CD4-positive, alpha-beta T cell (primary cell): ENCODE measurements at regions of chr12 and their contacts with region 1.

Region 1: DNA sequence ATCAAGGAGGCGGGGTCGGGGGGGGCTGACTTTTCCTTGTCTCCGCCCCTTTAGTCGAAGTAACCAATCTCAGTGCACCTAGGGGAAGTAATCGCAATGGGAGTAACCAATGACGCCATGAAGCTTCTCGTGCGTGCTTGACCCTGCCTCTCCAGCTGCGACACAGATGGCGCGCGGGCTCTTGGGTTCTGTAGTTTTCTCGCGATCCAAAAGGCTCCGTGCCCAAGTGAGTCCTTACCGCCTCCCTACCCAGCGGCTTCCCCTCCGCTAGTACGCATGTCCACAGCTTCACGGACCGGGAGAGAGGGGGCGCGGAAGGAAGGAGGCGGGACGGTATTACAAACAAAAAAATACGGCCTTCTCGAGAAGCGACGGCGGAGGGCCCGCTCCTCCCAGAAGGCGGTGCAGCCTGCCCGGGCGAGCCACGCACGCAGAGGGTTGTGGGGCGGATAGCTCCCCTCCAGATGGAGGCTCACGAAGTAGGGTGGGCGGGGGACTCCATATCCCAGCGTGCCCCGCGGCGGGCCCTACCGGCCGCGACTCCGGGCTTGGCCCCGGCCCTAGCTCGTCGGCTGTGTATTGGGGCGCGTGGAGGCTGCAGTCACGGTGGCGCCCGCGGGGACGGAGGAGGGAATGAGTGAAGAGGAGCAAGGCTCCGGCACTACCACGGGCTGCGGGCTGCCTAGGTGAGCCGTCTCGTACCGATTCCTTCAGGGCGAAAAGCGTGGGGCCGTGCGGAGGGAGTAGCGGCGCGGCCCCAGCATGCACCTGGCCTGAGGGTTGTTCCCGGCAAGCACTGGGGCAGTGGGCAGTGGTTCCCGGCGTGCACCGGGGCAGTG is at the start of gene TARBP2:
- DNase-seq: peak; percentile 90 to 100 (median 98)
- ATAC-seq: peak; percentile 77
- H3K4me3 ChIP-seq: peak within 1 kb of the TSS; percentile 66
- H3K4me3 Mint-ChIP-seq: peak within 1 kb of the TSS; percentile 96
- H3K27ac ChIP-seq: peak within 1 kb of the TSS; percentile 96 to 97
- H3K27ac Mint-ChIP-seq: peak within 1 kb of the TSS; percentile 98
- H3K4me1 ChIP-seq: peaks cover 43% of the 10 kb centered on the region
- H3K4me1 Mint-ChIP-seq: peaks cover 44% of the 10 kb centered on the region
- H3K27me3 ChIP-seq: no peaks in the 10 kb centered on the region
- H3K27me3 Mint-ChIP-seq: no peaks in the 10 kb centered on the region
- CTCF ChIP-seq: no peak
- total RNA-seq, gene TARBP2: 21.7 to 22.4 TPM

Region 2: GRCh38 chr12:53005986-53006809 is 494.8 kb before region 1 on chr12 and contains the start of gene EIF4B:
- CTCF ChIA-PET with region 1: no interaction called
- POLR2A ChIA-PET with region 1: interaction called, 16 read pairs
- intact Hi-C with region 1: no loop called
- DNase-seq: peak; percentile 98 to 100 (median 99)
- ATAC-seq: peak; percentile 85
- H3K4me3 ChIP-seq: peak within 1 kb of the TSS; percentile 100
- H3K4me3 Mint-ChIP-seq: peak within 1 kb of the TSS; percentile 99
- H3K27ac ChIP-seq: peak within 1 kb of the TSS; percentile 90 to 97
- H3K27ac Mint-ChIP-seq: peak within 1 kb of the TSS; percentile 99
- H3K4me1 ChIP-seq: peaks cover 50% of the 10 kb centered on the region
- H3K4me1 Mint-ChIP-seq: peaks cover 57% of the 10 kb centered on the region
- H3K27me3 ChIP-seq: no peaks in the 10 kb centered on the region
- H3K27me3 Mint-ChIP-seq: no peaks in the 10 kb centered on the region
- CTCF ChIP-seq: no peak
- total RNA-seq, gene EIF4B: 794 to 806 TPM

Region 3: DNA sequence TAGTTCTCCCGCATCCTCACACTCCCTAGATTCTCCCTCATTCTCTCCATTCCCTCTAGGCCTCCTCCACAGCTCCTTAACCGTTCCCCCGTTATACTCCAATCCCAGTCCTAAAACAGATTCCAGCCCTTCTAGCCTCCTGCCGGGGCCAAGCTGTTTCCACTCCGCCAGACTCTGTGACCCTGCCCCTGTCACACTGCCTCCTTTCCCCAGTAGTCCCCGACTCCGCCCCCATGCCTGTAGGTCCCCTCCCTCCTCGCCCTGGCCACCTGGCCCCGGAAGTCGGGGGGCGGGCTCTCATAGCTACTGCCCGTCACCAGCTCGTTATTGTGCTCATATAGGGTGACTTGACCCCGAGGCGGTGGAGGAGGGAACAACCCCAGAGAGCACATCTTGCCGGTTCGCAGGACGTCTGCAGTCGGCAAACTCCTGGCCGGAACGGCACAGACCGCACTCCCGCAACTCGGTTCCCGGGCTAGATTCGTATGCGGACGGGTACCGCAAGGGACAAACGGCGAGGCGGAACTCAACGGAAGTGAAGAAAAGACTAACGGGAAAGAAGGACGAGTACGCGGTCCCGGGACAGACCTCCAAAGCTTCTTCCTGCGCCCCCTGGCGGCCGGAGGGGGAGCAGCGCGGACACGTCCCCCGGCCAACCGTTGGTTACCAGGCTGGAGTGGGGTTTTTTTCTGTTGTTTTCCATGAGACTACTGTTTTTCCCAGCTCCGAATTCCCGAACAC is 179.8 kb before region 1 on chr12 and contains the start of gene AAAS:
- CTCF ChIA-PET with region 1: interaction called, 7 read pairs
- POLR2A ChIA-PET with region 1: interaction called, 39 read pairs
- intact Hi-C with region 1: loop called in 1 of 2 experiments (anchors 5 kb)
- DNase-seq: peak; percentile 86 to 97 (median 94)
- ATAC-seq: peak; percentile 79
- H3K4me3 ChIP-seq: peak within 1 kb of the TSS; percentile 69
- H3K4me3 Mint-ChIP-seq: peak within 1 kb of the TSS; percentile 94
- H3K27ac ChIP-seq: peak within 1 kb of the TSS; percentile 61 to 77
- H3K27ac Mint-ChIP-seq: peak within 1 kb of the TSS; percentile 87
- H3K4me1 ChIP-seq: peaks cover 52% of the 10 kb centered on the region
- H3K4me1 Mint-ChIP-seq: peaks cover 44% of the 10 kb centered on the region
- H3K27me3 ChIP-seq: no peaks in the 10 kb centered on the region
- H3K27me3 Mint-ChIP-seq: no peaks in the 10 kb centered on the region
- CTCF ChIP-seq: peak; percentile 100
- total RNA-seq, gene AAAS: 21.0 to 22.7 TPM

Region 4: GRCh38 chr12:53451661-53452158 is 49.3 kb before region 1 on chr12 and contains the start of gene PCBP2:
- CTCF ChIA-PET with region 1: interaction called, 14 read pairs
- POLR2A ChIA-PET with region 1: interaction called, 14 read pairs
- intact Hi-C with region 1: loop called (anchors 1 to 2 kb)
- DNase-seq: peak; percentile 93 to 99 (median 97)
- ATAC-seq: peak; percentile 93
- H3K4me3 ChIP-seq: peak within 1 kb of the TSS; percentile 86
- H3K4me3 Mint-ChIP-seq: peak within 1 kb of the TSS; percentile 98
- H3K27ac ChIP-seq: peak within 1 kb of the TSS; percentile 93
- H3K27ac Mint-ChIP-seq: peak within 1 kb of the TSS; percentile 89
- H3K4me1 ChIP-seq: peaks cover 16% of the 10 kb centered on the region
- H3K4me1 Mint-ChIP-seq: peaks cover 46% of the 10 kb centered on the region
- H3K27me3 ChIP-seq: no peaks in the 10 kb centered on the region
- H3K27me3 Mint-ChIP-seq: no peaks in the 10 kb centered on the region
- CTCF ChIP-seq: peak; percentile 87
- total RNA-seq, gene PCBP2: 1,331 to 1,359 TPM

Region 5: GRCh38 chr12:53481957-53482586 is 18.9 kb before region 1 on chr12:
- CTCF ChIA-PET with region 1: no interaction called
- POLR2A ChIA-PET with region 1: interaction called, 31 read pairs
- intact Hi-C with region 1: loop called in 1 of 2 experiments (anchors 2 kb)
- DNase-seq: peak in 2 of 14 experiments; percentile 50 to 59
- ATAC-seq: peak; percentile 73
- H3K4me3 ChIP-seq: no peak overlapping the region
- H3K4me3 Mint-ChIP-seq: peak overlapping the region; percentile 6
- H3K27ac ChIP-seq: no peak overlapping the region
- H3K27ac Mint-ChIP-seq: peak overlapping the region; percentile 57
- H3K4me1 ChIP-seq: peaks cover 7% of the 10 kb centered on the region
- H3K4me1 Mint-ChIP-seq: peaks cover 12% of the 10 kb centered on the region
- H3K27me3 ChIP-seq: no peaks in the 10 kb centered on the region
- H3K27me3 Mint-ChIP-seq: no peaks in the 10 kb centered on the region
- CTCF ChIP-seq: no peak

Region 6: DNA sequence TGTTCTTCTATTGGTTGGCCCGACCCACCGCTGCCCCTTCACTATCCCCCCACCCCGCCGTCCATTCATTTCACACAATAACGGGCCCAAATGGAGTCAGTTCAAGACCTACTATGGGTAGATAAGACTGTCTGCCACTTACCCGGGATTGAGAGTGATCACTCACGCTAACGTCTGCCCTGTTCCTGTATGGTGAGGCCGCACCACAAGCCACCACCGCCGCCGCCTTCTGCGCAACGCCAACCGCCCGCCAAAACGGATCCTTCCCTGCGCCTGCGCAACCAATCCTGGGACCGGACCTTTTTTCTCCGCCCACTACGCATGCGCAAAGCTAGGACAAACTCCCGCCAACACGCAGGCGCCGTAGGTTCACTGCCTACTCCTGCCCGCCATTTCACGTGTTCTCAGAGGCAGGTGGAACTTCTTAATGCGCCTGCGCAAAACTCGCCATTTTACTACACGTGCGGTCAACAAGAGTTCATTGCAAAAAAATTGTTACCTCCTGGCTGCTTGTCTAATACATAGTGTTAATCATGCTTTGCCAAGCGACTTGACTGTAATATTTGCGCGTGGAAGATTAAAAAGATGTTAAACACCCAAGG is 779.0 kb after region 1 on chr12 and contains the start of gene CBX5:
- CTCF ChIA-PET with region 1: no interaction called
- POLR2A ChIA-PET with region 1: interaction called, 13 read pairs
- intact Hi-C with region 1: no loop called
- DNase-seq: peak; percentile 99 to 100 (median 100)
- ATAC-seq: peak; percentile 45
- H3K4me3 ChIP-seq: peak within 1 kb of the TSS; percentile 80
- H3K4me3 Mint-ChIP-seq: no peak within 1 kb of the TSS
- H3K27ac ChIP-seq: peak within 1 kb of the TSS; percentile 93 to 95
- H3K27ac Mint-ChIP-seq: no peak within 1 kb of the TSS
- H3K4me1 ChIP-seq: peaks cover 55% of the 10 kb centered on the region
- H3K4me1 Mint-ChIP-seq: peaks cover 31% of the 10 kb centered on the region
- H3K27me3 ChIP-seq: no peaks in the 10 kb centered on the region
- H3K27me3 Mint-ChIP-seq: no peaks in the 10 kb centered on the region
- CTCF ChIP-seq: no peak
- total RNA-seq, gene CBX5: 38.8 to 38.9 TPM